ENCODE measurements at regions of chr9 and their contacts with region 1.

Region 1: DNA sequence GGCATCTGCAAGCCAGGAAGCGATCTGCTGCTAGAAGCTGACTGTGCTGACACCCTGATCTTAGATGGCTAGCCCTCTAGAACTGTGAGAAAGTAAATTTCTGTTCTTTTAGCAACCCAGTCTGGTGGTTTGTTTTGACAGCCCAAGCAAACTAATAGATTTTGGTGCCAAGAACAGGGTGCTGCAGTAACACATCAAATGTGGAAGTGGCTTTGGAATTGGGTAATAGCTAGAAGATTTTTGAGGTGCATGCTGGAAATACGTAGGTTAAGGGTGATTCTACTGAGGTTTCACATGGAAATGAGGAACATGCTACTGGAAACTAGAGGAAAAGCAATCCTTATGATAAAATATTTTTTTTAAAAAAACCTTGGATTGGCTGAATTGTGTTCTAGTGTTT is 153.5 kb upstream of the SH3GL2 start:
- DNase-seq: no peak
- CTCF ChIP-seq: no peak

Region 2: GRCh38 chr9:15889555-15889954 is 1535.8 kb before region 1 on chr9:
- in situ Hi-C with region 1: loop called (anchors 25 kb)
- DNase-seq: no peak
- CTCF ChIP-seq: no peak

Region 3: DNA sequence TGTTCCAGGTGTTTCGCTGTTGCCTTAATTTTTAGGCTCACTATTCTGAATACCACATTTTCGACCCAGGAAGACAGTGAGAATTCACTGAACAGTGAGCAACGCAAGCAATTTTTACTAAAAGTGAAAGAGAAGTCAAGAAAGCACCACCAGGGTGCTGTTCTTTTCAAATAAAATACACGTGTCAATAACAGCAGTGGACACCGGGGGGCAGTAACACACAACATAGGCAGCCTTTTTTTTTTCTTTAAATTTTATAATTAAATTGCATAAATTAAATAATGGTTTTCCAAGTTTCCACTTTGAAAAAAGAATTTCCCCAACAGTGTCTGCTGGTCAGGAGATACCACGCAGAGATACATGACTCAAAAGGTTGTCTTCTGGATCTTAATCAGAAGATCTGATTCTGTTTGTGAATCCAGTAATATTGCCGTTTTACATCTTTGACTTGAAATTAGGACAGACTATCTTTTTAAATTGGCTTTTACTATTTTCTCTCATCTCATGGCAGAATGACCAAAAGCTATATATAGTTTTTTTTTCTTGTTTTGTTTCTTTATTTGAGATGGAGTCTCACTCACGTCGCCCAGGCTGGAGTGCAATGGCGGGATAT is 106.4 kb after region 1 on chr9:
- in situ Hi-C with region 1: no loop called
- DNase-seq: peak; percentile 52
- CTCF ChIP-seq: peak; percentile 20